T-cell (primary cell): ENCODE measurements at regions of chr6 and their contacts with region 1.

Region 1: GRCh38 chr6:145734486-145735355 is 599 bp downstream of the EPM2A start:
- DNase-seq: peak in 34 of 35 experiments; percentile 13 to 68 (median 40)
- ATAC-seq: peak; percentile 66 to 79 (median 75)
- H3K4me3 ChIP-seq: peak overlapping the region; percentile 74 to 92
- H3K4me3 Mint-ChIP-seq: peak overlapping the region; percentile 94 to 99 (median 95)
- H3K27ac ChIP-seq: peak overlapping the region; percentile 62
- H3K27ac Mint-ChIP-seq: peak overlapping the region; percentile 93 to 94
- H3K4me1 ChIP-seq: peaks cover 4% of the 10 kb centered on the region in 2 experiments
- H3K4me1 Mint-ChIP-seq: peaks cover 15 to 22% (median 22%) of the 10 kb centered on the region in 3 donors
- H3K27me3 ChIP-seq: no peaks in the 10 kb centered on the region
- H3K27me3 Mint-ChIP-seq: no peaks in the 10 kb centered on the region

Region 2: DNA sequence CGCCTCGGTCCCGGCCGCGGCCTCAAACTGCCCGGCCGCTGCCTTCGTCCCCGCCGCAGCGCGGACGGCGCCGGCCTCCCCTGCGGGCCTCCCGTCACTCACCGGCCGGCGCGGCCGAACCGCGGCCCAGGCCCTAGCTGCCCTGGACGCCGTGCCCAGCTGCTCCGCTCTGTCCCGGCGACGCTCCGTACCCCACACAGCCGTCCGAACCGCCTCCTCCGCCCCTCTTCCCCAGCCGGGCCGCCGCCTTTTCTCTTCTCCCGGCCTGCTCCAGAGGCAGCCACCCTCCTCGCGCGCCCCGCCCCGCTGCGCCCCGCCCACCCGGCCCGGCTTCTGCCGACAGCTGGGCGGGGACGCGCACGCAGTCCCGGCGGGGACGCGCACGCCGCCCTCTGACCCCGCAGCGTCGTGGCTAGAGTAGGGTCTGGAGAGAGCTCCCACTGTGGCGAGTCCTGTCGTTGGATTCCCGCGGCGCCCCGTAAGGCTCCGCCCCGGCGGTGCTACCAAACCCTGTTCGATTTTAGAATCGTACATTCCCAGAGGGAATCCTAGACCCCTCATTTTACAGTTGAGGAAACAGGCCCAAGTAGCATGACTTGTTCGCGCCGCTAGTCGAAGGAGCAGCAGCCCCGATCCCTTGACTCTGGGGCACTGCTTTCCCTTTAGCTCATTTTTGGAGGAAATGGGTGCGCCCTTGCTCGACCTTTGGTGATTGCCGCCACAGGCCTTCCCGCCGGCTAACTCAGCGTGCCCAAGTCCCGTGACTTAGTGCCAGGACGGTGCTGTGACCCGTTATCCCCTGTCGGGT is 80.0 kb after region 1 on chr6 and contains the start of gene FBXO30:
- CTCF ChIA-PET with region 1: interaction called in 1 of 2 experiments, 16 read pairs
- POLR2A ChIA-PET with region 1: interaction called, 4 to 7 read pairs
- DNase-seq: peak; percentile 72 to 96 (median 81)
- ATAC-seq: peak; percentile 86 to 95 (median 90)
- H3K4me3 ChIP-seq: peak within 1 kb of the TSS; percentile 76 to 84
- H3K4me3 Mint-ChIP-seq: peak within 1 kb of the TSS; percentile 89 to 94 (median 94)
- H3K27ac ChIP-seq: peak within 1 kb of the TSS; percentile 83
- H3K27ac Mint-ChIP-seq: peak within 1 kb of the TSS; percentile 88 to 94
- H3K4me1 ChIP-seq: peaks cover 12 to 17% of the 10 kb centered on the region in 2 experiments
- H3K4me1 Mint-ChIP-seq: peaks cover 37 to 45% (median 44%) of the 10 kb centered on the region in 3 donors
- H3K27me3 ChIP-seq: no peaks in the 10 kb centered on the region
- H3K27me3 Mint-ChIP-seq: no peaks in the 10 kb centered on the region
- total RNA-seq, gene FBXO30: 2.5 to 6.2 (median 5.0) TPM